Gastrocnemius medialis (tissue), 4 donors: ENCODE measurements at regions of chr12 and their contacts with region 1.

Region 1: GRCh38 chr12:62793256-62794217 is 141.4 kb downstream of the PPM1H start:
- DNase-seq: peak; percentile 56 to 71
- ATAC-seq: peak; percentile 81 to 88
- H3K4me3 ChIP-seq: peak overlapping the region; percentile 10 to 49 (median 33)
- H3K27ac ChIP-seq: no peak overlapping the region
- H3K4me1 ChIP-seq: peaks cover 8 to 15% of the 10 kb centered on the region in 2 donors
- H3K27me3 ChIP-seq: no peaks in the 10 kb centered on the region
- CTCF ChIP-seq: peak; percentile 86 to 97 (median 92)
- POLR2A ChIP-seq: no peak

Region 2: GRCh38 chr12:62435303-62436163 is 358.0 kb before region 1 on chr12:
- in situ Hi-C with region 1: loop called (anchors 5 to 10 kb)
- intact Hi-C with region 1: loop called (anchors 1 kb)
- DNase-seq: no peak
- ATAC-seq: peak in 1 of 2 donors; percentile 26
- H3K4me3 ChIP-seq: peak overlapping the region; percentile 44 to 51 (median 48)
- H3K27ac ChIP-seq: no peak overlapping the region
- H3K4me1 ChIP-seq: peaks cover 4 to 6% of the 10 kb centered on the region in 2 donors
- H3K27me3 ChIP-seq: peaks cover 21 to 36% (median 23%) of the 10 kb centered on the region in 3 donors
- CTCF ChIP-seq: peak in 1 of 5 experiments; percentile 37
- POLR2A ChIP-seq: no peak

Region 3: GRCh38 chr12:62581288-62582064 is 212.1 kb before region 1 on chr12:
- in situ Hi-C with region 1: loop called (anchors 5 to 10 kb)
- intact Hi-C with region 1: loop called (anchors 1 kb)
- DNase-seq: no peak
- ATAC-seq: peak; percentile 60 to 80
- H3K4me3 ChIP-seq: no peak overlapping the region
- H3K27ac ChIP-seq: no peak overlapping the region
- H3K4me1 ChIP-seq: no peaks in the 10 kb centered on the region
- H3K27me3 ChIP-seq: no peaks in the 10 kb centered on the region
- CTCF ChIP-seq: peak; percentile 38 to 68 (median 64)
- POLR2A ChIP-seq: no peak

Region 4: DNA sequence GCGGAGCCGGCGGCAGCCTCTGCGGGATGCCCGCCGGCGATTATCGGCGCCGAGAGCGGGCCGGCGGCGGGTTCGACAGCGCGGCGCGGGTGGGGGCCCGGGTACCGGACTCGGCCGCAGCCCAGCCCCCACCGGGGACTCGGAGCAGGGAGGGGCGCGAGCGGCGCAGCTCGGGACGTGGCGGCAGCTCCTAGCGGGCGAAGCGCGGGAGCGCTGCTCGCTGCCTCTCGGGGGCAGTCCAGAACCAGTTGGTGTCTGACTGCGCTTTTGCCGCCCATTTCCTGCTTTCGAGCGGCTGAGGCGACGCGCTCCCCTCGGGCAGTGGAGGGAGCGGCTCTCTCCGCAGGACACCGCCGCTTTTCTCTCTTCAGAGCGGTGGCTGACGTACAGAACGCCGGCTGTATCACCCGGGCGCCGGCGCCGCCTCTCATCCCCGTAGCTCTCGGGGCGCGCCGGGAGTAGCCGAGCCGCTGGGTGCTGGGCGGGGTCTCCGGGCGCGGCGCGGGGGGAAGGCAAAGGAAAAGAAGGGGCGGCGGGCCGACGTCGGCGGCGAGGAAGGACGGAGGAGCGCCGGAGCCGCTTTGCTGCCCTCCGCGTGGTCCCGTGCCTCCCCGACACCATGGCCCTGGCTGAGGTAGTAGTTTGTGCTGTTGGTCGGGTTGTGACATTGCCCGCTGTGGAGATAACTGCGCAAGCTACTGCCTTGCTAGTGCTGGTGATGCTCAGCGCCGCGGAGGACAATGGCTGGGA is 190.3 kb before region 1 on chr12:
- in situ Hi-C with region 1: no loop called
- intact Hi-C with region 1: loop called (anchors 1 kb)
- DNase-seq: peak; percentile 74 to 80
- ATAC-seq: peak; percentile 84 to 88
- H3K4me3 ChIP-seq: peak overlapping the region; percentile 77 to 86 (median 82)
- H3K27ac ChIP-seq: peak overlapping the region; percentile 94 to 98 (median 97)
- H3K4me1 ChIP-seq: peaks cover 26 to 29% of the 10 kb centered on the region in 2 donors
- H3K27me3 ChIP-seq: no peaks in the 10 kb centered on the region
- CTCF ChIP-seq: peak; percentile 45 to 73 (median 63)
- POLR2A ChIP-seq: peak; percentile 25 to 54

Region 5: DNA sequence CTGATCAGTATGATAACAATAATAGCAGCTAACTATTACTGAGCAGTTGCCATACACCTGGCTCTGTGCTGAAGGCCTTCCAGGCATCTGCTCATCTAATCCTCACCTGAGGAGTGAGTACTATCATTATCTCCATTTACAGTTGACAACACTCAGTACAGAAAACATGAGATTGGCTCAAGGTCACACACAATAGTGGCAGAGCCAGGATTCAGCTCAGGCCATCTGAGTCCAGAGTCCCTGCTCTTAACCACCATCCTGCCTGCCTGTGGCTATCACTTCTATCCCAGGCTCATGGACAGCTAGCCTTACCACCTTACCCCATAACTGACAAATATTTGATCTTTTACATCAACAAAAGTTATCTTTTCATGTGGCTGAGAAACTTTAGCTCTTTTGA is 14.0 kb before region 1 on chr12:
- in situ Hi-C with region 1: no loop called
- intact Hi-C with region 1: no loop called
- DNase-seq: no peak
- ATAC-seq: no peak
- H3K4me3 ChIP-seq: no peak overlapping the region
- H3K27ac ChIP-seq: no peak overlapping the region
- H3K4me1 ChIP-seq: peaks cover 0 to 4% of the 10 kb centered on the region in 2 donors
- H3K27me3 ChIP-seq: no peaks in the 10 kb centered on the region
- CTCF ChIP-seq: no peak
- POLR2A ChIP-seq: no peak